ENCODE measurements at regions of chrX and their contacts with region 1.

Region 1: DNA sequence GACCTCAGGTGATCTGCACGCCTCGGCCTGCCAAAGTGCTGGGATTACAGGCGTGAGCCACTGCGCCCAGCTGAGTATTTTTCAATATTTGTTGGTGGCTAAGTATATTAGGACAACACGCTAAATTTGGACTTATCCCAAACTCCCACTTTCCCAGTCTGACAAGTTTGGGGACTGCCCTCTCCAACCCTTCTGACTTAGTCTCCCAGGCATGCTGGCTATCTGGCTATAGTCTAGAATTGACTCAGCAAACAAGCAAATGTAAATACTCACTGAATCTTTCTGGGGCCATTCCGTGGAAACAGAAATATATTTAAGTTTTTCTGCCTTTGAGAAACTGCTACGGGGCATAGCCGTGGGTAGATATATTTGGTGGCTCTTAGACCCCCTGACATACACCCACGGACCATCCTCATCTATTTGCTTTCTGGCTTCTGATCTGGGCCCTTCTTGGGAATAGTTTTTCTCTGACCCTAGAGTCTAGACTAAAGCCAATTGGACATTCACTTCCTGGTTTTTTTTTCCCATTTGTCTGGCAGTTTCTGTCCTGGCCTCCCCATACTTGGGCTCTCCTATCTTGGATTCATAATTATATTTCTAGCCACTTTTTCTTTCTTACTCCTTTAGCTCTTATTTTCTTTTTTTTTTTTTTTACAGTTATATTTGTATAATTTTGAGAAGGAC is 11.3 kb upstream of the DOCK11 start:
- DNase-seq: no peak
- ATAC-seq: no peak
- H3K4me3 ChIP-seq: no peak overlapping the region
- H3K4me3 Mint-ChIP-seq: no peak overlapping the region
- H3K27ac ChIP-seq: no peak overlapping the region
- H3K27ac Mint-ChIP-seq: no peak overlapping the region
- H3K4me1 ChIP-seq: no peaks in the 10 kb centered on the region
- H3K4me1 Mint-ChIP-seq: no peaks in the 10 kb centered on the region
- H3K27me3 ChIP-seq: no peaks in the 10 kb centered on the region
- H3K27me3 Mint-ChIP-seq: no peaks in the 10 kb centered on the region
- CTCF ChIP-seq: no peak

Region 2: DNA sequence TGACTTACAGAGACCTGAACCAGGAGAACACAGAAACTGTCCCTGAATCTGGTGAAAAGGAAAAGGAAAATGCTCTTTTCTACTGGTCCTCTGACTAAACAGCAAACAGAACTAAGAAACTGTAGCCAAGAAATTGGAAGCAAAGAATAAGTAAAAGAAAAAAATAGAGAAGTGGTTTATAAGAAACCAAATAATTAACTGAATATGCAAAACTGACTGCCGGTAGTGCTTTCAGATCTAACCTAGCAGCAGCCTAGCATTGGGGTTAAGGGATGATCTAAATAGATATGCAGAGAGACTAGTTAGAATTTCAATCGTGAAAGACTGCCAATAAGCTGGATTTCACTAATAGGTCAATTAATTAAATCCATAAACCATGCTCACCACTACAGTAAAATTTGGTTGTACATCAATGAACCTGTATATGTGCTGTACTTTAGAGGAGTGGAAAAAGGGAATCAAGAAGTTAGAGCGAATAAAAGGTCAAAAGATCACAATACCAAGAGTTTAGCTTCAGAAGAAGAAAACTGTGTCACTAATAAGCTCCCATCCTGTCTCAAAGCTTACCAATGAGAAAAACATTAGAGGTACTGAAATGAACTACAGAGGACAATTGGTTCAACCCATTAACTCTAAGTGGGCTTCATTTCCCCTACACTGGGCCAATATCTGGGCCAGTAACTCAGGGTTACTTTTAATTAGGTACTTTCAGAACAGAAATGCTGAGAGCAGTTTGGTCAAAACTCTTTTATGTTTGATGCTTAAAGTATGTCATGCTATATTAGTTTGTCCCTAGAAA is 421.3 kb before region 1 on chrX:
- CTCF ChIA-PET with region 1: no interaction called
- POLR2A ChIA-PET with region 1: no interaction called
- intact Hi-C with region 1: no loop called
- DNase-seq: no peak
- ATAC-seq: no peak
- H3K4me3 ChIP-seq: no peak overlapping the region
- H3K4me3 Mint-ChIP-seq: no peak overlapping the region
- H3K27ac ChIP-seq: no peak overlapping the region
- H3K27ac Mint-ChIP-seq: no peak overlapping the region
- H3K4me1 ChIP-seq: no peaks in the 10 kb centered on the region
- H3K4me1 Mint-ChIP-seq: no peaks in the 10 kb centered on the region
- H3K27me3 ChIP-seq: no peaks in the 10 kb centered on the region
- H3K27me3 Mint-ChIP-seq: no peaks in the 10 kb centered on the region
- CTCF ChIP-seq: no peak

Region 3: GRCh38 chrX:118538386-118538785 is 54.0 kb after region 1 on chrX:
- CTCF ChIA-PET with region 1: no interaction called
- POLR2A ChIA-PET with region 1: no interaction called
- intact Hi-C with region 1: no loop called
- DNase-seq: no peak
- ATAC-seq: no peak
- H3K4me3 ChIP-seq: no peak overlapping the region
- H3K4me3 Mint-ChIP-seq: peak overlapping the region; percentile 11
- H3K27ac ChIP-seq: no peak overlapping the region
- H3K27ac Mint-ChIP-seq: peak overlapping the region; percentile 86
- H3K4me1 ChIP-seq: peaks cover 28% of the 10 kb centered on the region
- H3K4me1 Mint-ChIP-seq: peaks cover 67% of the 10 kb centered on the region
- H3K27me3 ChIP-seq: no peaks in the 10 kb centered on the region
- H3K27me3 Mint-ChIP-seq: no peaks in the 10 kb centered on the region
- CTCF ChIP-seq: no peak

Region 4: GRCh38 chrX:118552121-118552900 is 67.9 kb after region 1 on chrX:
- CTCF ChIA-PET with region 1: no interaction called
- POLR2A ChIA-PET with region 1: no interaction called
- intact Hi-C with region 1: loop called in 1 of 2 experiments (anchors 5 kb)
- DNase-seq: peak in 2 of 14 experiments; percentile 15 to 36
- ATAC-seq: no peak
- H3K4me3 ChIP-seq: no peak overlapping the region
- H3K4me3 Mint-ChIP-seq: no peak overlapping the region
- H3K27ac ChIP-seq: no peak overlapping the region
- H3K27ac Mint-ChIP-seq: peak overlapping the region; percentile 68
- H3K4me1 ChIP-seq: peaks cover 4% of the 10 kb centered on the region
- H3K4me1 Mint-ChIP-seq: peaks cover 11% of the 10 kb centered on the region
- H3K27me3 ChIP-seq: no peaks in the 10 kb centered on the region
- H3K27me3 Mint-ChIP-seq: no peaks in the 10 kb centered on the region
- CTCF ChIP-seq: no peak

Measured in CD4-positive, alpha-beta T cell (primary cell).